GM13976 (cell line): ENCODE measurements at regions of chr1 and their contacts with region 1.

Region 1: DNA sequence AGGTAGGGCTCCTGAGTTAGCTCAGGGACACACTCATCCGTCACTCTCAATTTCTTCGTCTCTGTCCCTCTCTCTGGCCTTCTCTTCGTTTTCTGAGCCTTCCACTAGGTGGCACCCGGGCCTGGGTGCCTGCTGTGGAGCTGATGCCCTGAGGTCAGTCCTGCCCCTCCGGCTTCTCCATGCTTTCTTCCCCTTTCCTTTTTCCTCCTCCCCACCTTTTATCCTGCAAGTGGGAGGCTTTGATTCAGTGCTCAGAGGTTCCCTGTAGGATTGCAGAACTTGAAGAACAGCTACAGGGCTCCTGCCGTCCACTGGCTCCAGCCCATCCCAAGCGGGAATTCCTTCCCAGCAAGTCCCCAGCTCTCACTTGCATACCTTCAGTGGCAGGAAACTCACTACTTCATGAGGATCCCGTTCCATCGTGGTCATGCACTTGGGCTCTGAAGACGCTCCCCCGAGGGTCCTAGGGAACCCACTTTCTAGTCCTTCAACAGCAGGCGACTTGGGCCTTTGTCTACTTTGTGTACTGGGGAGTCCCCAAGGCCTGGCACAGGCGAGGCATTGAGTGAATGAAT is 45.6 kb downstream of the SRRM1 start:
- DNase-seq: peak; percentile 83
- CTCF ChIP-seq: peak; percentile 76

Region 2: GRCh38 chr1:24822887-24823286 is 134.2 kb after region 1 on chr1:
- in situ Hi-C with region 1: loop called (anchors 5 kb)
- DNase-seq: no peak
- CTCF ChIP-seq: no peak

Region 3: DNA sequence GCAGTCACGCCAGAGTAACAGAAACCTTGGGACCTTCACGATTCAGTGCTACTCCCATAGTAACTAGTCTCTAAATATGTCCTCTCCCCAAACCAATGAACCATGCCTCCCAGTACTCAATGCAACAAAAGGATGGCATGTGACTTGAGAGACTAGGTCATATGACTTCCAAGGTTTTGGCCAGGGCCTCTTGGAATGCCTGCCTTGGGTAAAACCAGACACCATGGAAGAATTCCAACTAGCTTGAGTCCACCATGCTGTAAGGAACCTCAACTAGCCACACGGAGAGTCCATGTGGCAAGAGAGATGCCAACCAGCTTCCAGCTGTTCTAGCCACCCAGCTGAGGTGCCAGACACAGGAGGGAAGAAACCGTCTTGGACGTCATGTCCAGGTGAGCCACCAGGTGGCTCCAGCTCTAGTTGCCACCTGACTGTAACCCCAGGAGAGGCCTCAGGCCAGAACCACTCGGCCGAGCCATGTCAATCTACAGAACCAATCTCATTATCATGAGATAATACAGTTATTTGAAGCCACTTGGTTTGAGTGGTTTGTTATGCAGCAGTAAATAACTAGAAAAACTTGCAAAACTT is 428.6 kb after region 1 on chr1:
- in situ Hi-C with region 1: no loop called
- DNase-seq: no peak
- CTCF ChIP-seq: peak; percentile 25

Region 4: DNA sequence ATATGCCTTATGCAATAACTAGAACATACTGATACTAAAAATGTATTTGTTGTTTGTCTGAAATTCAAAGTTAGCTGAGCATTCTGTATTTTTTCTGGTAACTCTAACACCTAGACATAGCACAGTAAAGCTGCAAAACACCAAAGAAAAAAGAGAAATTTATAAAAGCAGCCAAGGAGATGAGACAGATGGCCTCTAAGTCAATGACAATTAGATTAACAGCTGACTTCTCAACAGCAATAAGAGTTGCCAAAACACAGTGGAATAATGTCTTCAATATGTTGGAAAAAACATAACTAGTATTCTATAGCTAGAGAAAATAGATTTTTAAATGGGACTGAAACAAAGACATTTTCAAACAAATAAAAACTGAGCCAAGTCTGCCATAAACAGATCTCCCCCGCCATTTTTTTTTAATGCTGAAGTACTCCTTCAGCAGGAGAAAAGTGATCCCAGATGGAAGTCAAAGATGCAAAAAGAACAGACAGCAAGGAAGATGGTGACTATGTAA is 462.3 kb after region 1 on chr1:
- in situ Hi-C with region 1: no loop called
- DNase-seq: no peak
- CTCF ChIP-seq: no peak